GM10248 (cell line): ENCODE measurements at regions of chr17 and their contacts with region 1.

Region 1: DNA sequence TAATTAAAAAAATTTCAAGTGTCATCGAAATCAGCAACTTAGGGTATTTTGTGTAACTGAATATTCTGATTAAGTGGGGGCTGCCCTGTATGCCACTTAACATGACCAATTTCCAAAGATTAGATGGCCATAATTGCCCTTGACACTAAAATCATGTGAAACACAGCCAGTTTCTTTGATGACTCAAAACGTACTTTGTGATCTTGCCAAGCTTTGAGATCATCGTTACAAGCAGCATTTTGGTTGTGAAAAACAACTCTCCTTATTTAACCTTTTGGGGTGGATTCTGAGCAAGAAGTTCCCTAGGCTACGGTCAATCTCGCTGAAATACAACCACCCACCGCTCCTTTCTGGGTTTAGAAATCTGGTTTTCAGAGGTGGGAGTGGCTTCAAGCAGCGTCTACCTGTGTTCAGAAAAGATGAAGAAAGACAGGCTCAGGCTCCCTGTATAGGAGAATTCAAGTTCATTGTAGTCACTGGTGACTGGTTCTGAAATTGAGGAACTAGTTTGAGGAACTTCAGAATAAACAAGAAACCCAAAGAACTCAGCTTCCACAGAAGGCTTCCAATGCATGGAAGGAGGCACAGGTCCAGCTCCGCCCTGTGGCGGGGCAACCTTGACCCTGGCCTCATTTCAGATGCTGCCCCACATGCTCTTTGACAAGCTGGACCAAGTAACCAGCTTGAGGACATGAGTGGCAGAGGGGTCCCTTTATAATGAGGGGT is 9.4 kb downstream of the MAP3K14 start:
- DNase-seq: peak; percentile 66
- CTCF ChIP-seq: no peak

Region 2: GRCh38 chr17:44556832-44557606 is 750.4 kb before region 1 on chr17 and contains the start of gene FZD2:
- CTCF ChIA-PET with region 1: no interaction called
- POLR2A ChIA-PET with region 1: no interaction called
- DNase-seq: peak; percentile 90
- CTCF ChIP-seq: no peak

Region 3: DNA sequence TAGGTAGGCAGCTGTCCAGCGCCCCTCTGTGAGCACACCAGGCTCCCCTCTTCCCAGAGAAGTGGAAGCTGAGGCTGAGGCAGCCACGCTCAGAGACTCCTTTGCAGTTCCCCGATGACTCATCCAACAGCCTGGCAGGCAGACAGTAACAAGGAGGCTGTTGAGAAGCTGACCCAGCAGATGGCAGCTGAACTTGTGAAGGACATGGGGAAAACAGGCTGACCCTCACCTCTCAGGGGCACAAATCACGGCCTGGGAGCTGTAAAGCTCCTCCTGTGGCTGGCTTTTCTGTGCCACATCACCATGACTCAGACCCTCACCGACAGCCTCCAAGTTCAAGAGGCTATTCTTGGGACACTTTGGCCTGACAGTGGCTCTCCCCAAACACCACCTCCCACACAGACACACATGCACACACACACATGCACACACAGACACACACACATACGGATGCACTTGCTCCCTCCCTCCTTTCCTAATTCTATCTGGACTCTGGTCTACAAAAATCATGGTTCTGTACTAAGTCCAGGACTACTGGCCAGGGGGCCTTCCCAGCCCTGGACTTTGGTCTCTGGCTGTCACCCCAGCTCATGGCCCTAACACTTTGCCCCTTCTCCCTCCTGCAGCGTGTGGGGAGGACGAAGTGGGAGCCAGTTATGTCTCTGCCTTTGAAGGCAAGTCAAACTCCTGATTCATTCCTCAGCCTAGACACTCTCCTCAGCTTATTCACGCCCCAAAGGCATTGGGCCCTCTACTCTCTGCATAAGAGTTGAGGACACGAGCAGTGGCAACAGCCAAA is 13.8 kb before region 1 on chr17:
- CTCF ChIA-PET with region 1: interaction called, 33 read pairs
- POLR2A ChIA-PET with region 1: interaction called, 6 read pairs
- DNase-seq: no peak
- CTCF ChIP-seq: no peak

Region 4: GRCh38 chr17:45428050-45428617 is 120.7 kb after region 1 on chr17:
- CTCF ChIA-PET with region 1: no interaction called
- POLR2A ChIA-PET with region 1: no interaction called
- DNase-seq: peak; percentile 83
- CTCF ChIP-seq: peak; percentile 96